ENCODE measurements at regions of chr6 and their contacts with region 1.

Region 1: GRCh38 chr6:131199568-131200272 is 64.5 kb downstream of the AKAP7 start:
- DNase-seq: peak; percentile 62 to 93 (median 74)
- ATAC-seq: peak; percentile 93 to 96 (median 94)
- H3K4me3 ChIP-seq: peak overlapping the region; percentile 48 to 62
- H3K4me3 Mint-ChIP-seq: peak overlapping the region; percentile 73 to 82 (median 81)
- H3K27ac ChIP-seq: peak overlapping the region; percentile 93
- H3K27ac Mint-ChIP-seq: peak overlapping the region; percentile 98
- H3K4me1 ChIP-seq: peaks cover 36 to 54% of the 10 kb centered on the region in 2 experiments
- H3K4me1 Mint-ChIP-seq: peaks cover 62 to 64% (median 63%) of the 10 kb centered on the region in 3 donors
- H3K27me3 ChIP-seq: no peaks in the 10 kb centered on the region
- H3K27me3 Mint-ChIP-seq: no peaks in the 10 kb centered on the region

Region 2: GRCh38 chr6:131213501-131213990 is 13.8 kb after region 1 on chr6:
- CTCF ChIA-PET with region 1: interaction called in 1 of 2 experiments, 13 read pairs
- POLR2A ChIA-PET with region 1: interaction called in 1 of 2 experiments, 3 read pairs
- DNase-seq: no peak
- ATAC-seq: peak in 3 of 4 experiments; percentile 42 to 56 (median 49)
- H3K4me3 ChIP-seq: no peak overlapping the region
- H3K4me3 Mint-ChIP-seq: peak overlapping the region in 1 of 3 donors; percentile 25
- H3K27ac ChIP-seq: peak overlapping the region; percentile 9
- H3K27ac Mint-ChIP-seq: peak overlapping the region; percentile 37 to 44
- H3K4me1 ChIP-seq: peaks cover 11 to 12% of the 10 kb centered on the region in 2 experiments
- H3K4me1 Mint-ChIP-seq: peaks cover 38 to 52% (median 50%) of the 10 kb centered on the region in 3 donors
- H3K27me3 ChIP-seq: no peaks in the 10 kb centered on the region
- H3K27me3 Mint-ChIP-seq: no peaks in the 10 kb centered on the region

Region 3: DNA sequence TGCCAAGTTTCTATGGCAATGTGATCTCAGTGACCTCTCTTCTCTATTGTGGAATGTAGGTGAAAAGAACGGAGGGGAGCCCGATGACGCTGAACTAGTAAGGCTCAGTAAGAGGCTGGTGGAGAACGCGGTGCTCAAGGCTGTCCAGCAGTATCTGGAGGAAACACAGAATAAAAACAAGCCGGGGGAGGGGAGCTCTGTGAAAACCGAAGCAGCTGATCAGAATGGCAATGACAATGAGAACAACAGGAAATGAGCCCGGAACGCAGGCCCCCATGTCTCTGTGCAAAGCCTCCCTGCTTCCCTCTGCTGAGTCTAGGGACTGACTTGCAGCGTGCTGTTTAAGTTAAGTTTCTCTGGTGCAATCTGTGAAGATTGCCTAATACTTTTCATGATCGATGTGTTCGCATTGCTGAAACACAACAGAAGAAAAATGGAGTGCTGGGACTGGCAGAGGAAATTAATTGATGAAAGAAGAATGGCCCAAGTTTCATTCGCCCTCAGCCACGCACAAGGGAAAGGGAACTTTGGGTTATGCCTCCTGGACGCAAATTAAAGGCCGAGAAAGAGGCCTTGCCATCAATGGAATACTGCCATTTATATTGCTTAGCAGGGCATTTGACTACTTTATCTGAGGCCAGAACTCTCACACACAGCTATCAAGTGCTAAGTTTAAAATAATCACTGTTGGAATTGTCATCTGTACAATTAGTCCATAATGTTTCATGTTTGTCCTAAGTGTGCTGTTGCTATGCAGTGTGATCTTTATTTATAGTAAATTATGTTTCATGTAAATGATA is 82.0 kb after region 1 on chr6:
- CTCF ChIA-PET with region 1: interaction called, 3 to 12 read pairs
- POLR2A ChIA-PET with region 1: no interaction called
- DNase-seq: peak; percentile 55 to 92 (median 79)
- ATAC-seq: peak; percentile 98 to 99 (median 98)
- H3K4me3 ChIP-seq: peak overlapping the region in 1 of 2 donors; percentile 16
- H3K4me3 Mint-ChIP-seq: peak overlapping the region; percentile 68 to 72 (median 72)
- H3K27ac ChIP-seq: peak overlapping the region; percentile 90
- H3K27ac Mint-ChIP-seq: peak overlapping the region; percentile 98 to 99
- H3K4me1 ChIP-seq: peaks cover 17 to 43% of the 10 kb centered on the region in 2 experiments
- H3K4me1 Mint-ChIP-seq: peaks cover 64 to 74% (median 65%) of the 10 kb centered on the region in 3 donors
- H3K27me3 ChIP-seq: no peaks in the 10 kb centered on the region
- H3K27me3 Mint-ChIP-seq: no peaks in the 10 kb centered on the region

Region 4: DNA sequence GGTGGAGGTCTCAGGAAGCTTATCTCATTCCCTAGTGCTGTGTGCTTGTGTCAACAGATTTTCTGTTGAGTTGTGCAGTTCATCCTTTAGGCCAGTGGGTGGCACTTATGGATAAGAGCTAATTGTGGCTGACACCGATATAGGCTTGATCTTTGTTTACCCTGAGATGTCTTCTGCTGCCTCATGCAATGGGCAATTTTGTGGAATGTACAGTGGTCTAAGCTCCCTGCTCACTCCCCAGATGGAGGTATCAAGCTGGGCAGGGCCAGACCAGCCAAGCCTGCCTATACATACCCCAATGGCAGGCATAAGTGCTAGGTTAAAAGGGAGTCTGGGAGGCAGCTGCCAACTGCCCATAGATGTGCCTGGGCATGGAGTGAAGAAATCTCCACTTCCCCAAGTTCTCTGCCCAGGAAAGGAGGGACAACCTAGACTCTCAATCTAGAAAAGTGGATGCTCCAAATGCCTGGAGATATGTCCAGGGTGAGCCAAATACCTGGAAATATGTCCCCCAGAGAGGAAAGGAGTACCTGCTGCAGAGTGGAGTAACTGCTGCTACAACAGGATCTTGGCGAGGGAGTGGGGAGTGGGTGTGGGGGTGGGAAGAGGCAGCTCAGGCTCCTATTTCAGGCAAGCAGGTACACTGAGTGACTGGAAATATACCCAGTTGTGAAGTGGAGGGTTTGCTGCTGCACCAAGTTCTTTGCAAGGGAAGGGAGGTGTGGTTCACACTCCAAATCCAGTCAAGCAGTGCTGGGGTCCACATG is 320.1 kb after region 1 on chr6:
- CTCF ChIA-PET with region 1: interaction called, 4 to 15 read pairs
- POLR2A ChIA-PET with region 1: no interaction called
- DNase-seq: peak in 29 of 35 experiments; percentile 13 to 71 (median 35)
- ATAC-seq: peak; percentile 94 to 96 (median 94)
- H3K4me3 ChIP-seq: no peak overlapping the region
- H3K4me3 Mint-ChIP-seq: no peak overlapping the region
- H3K27ac ChIP-seq: no peak overlapping the region
- H3K27ac Mint-ChIP-seq: no peak overlapping the region
- H3K4me1 ChIP-seq: peaks cover 2 to 11% of the 10 kb centered on the region in 2 experiments
- H3K4me1 Mint-ChIP-seq: peaks cover 18 to 24% (median 20%) of the 10 kb centered on the region in 3 donors
- H3K27me3 ChIP-seq: no peaks in the 10 kb centered on the region
- H3K27me3 Mint-ChIP-seq: no peaks in the 10 kb centered on the region

Region 5: GRCh38 chr6:131532580-131533039 is 332.9 kb after region 1 on chr6:
- CTCF ChIA-PET with region 1: interaction called, 26 to 74 read pairs
- POLR2A ChIA-PET with region 1: no interaction called
- DNase-seq: peak in 1 of 35 experiments; percentile 14
- ATAC-seq: peak in 3 of 4 experiments; percentile 34 to 61 (median 46)
- H3K4me3 ChIP-seq: no peak overlapping the region
- H3K4me3 Mint-ChIP-seq: peak overlapping the region in 1 of 3 donors; percentile 9
- H3K27ac ChIP-seq: no peak overlapping the region
- H3K27ac Mint-ChIP-seq: peak overlapping the region; percentile 85 to 94
- H3K4me1 ChIP-seq: peaks cover 10 to 19% of the 10 kb centered on the region in 2 experiments
- H3K4me1 Mint-ChIP-seq: peaks cover 55 to 61% (median 56%) of the 10 kb centered on the region in 3 donors
- H3K27me3 ChIP-seq: no peaks in the 10 kb centered on the region
- H3K27me3 Mint-ChIP-seq: no peaks in the 10 kb centered on the region

Region 6: DNA sequence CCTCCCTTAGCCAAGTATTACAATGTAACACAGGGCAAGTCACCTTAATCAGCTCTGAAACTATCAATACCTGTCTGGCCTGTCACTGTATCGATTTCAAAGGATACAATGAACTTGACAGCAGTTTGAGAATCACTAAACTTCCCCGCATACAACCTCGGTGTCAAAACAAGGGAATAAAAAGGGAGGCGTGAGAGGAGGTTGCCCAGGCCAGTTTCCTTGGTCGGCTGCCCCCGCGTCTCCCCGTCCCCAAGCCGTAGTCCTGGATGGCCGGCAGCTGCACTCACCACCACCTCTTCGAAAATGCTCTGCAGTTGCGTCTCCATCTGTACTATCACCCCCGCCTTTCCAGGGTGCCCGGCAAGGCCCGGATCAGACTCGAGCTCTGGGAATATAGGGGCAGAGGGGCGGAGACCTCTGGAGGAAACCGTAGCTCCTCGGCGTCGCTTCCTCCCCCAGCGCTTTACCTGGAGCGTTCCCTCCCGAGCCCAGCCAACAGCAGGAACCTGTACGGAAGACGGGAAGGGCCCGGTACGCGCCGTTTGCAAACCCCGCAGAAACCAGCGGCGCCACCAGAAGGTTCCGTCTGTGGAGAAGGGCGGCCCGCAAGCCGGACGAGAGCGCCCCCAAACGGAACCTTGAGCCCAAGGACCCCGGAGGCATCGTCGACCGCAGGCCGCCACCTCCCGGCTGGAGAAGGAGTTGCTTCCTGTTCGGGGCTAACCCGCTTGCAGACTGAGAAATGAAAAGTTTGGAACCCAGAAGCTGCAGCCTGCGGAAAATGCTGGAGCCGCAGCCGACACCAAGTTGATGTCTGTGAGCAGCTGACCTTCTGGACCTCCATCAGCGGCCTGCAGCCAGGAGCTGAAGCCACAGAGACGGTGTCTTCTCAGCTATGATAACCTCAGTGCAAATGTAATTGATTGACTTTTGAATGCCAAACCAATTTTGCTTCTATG is 428.3 kb after region 1 on chr6 and contains the start of gene MED23:
- CTCF ChIA-PET with region 1: interaction called, 3 to 19 read pairs
- POLR2A ChIA-PET with region 1: no interaction called
- DNase-seq: peak; percentile 81 to 98 (median 91)
- ATAC-seq: peak; percentile 93 to 98 (median 96)
- H3K4me3 ChIP-seq: peak within 1 kb of the TSS; percentile 84 to 92
- H3K4me3 Mint-ChIP-seq: peak within 1 kb of the TSS; percentile 94 to 99 (median 98)
- H3K27ac ChIP-seq: peak within 1 kb of the TSS; percentile 58
- H3K27ac Mint-ChIP-seq: peak within 1 kb of the TSS; percentile 95 to 96
- H3K4me1 ChIP-seq: peaks cover 6 to 15% of the 10 kb centered on the region in 2 experiments
- H3K4me1 Mint-ChIP-seq: peaks cover 38 to 44% (median 39%) of the 10 kb centered on the region in 3 donors
- H3K27me3 ChIP-seq: no peaks in the 10 kb centered on the region
- H3K27me3 Mint-ChIP-seq: no peaks in the 10 kb centered on the region
- total RNA-seq, gene MED23: 45.6 to 64.5 (median 46.6) TPM

Region 7: DNA sequence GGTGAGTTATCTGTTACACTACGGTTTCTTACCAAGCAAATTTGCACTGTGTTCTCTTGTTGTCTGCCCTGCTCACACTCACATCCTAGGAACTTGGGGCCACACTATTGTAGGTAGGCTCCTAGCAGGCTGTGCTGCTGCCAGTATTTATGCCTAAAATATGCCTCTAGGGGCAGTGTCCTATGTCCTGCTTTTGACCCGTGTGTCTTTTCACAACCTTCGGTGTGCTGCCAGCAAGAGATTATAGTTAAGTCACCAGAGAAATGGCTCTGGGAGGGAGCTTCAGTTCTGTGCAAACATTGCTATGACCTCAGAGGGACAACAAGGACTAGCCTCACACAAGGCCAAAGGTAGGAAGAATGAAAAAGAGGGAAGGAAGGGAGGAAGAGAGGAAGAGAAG is 1398.8 kb after region 1 on chr6:
- CTCF ChIA-PET with region 1: no interaction called
- POLR2A ChIA-PET with region 1: interaction called in 1 of 2 experiments, 10 read pairs
- DNase-seq: no peak
- ATAC-seq: no peak
- H3K4me3 ChIP-seq: no peak overlapping the region
- H3K4me3 Mint-ChIP-seq: no peak overlapping the region
- H3K27ac ChIP-seq: no peak overlapping the region
- H3K27ac Mint-ChIP-seq: no peak overlapping the region
- H3K4me1 ChIP-seq: no peaks in the 10 kb centered on the region
- H3K4me1 Mint-ChIP-seq: no peaks in the 10 kb centered on the region
- H3K27me3 ChIP-seq: peaks cover 0 to 6% of the 10 kb centered on the region in 2 experiments
- H3K27me3 Mint-ChIP-seq: peaks cover 16 to 24% of the 10 kb centered on the region in 2 donors

Measured in T-cell (primary cell).